ENCODE measurements at regions of chr5 and their contacts with region 1.

Region 1: GRCh38 chr5:130773811-130774210 is 391.2 kb downstream of the HINT1 start:
- DNase-seq: no peak
- H3K4me3 ChIP-seq: no peak overlapping the region
- H3K4me3 Mint-ChIP-seq: no peak overlapping the region
- H3K27ac ChIP-seq: no peak overlapping the region
- H3K27ac Mint-ChIP-seq: no peak overlapping the region
- H3K4me1 ChIP-seq: no peaks in the 10 kb centered on the region
- H3K4me1 Mint-ChIP-seq: no peaks in the 10 kb centered on the region
- H3K27me3 ChIP-seq: peaks cover 4% of the 10 kb centered on the region
- H3K27me3 Mint-ChIP-seq: peaks cover 6 to 33% of the 10 kb centered on the region in 2 donors

Region 2: DNA sequence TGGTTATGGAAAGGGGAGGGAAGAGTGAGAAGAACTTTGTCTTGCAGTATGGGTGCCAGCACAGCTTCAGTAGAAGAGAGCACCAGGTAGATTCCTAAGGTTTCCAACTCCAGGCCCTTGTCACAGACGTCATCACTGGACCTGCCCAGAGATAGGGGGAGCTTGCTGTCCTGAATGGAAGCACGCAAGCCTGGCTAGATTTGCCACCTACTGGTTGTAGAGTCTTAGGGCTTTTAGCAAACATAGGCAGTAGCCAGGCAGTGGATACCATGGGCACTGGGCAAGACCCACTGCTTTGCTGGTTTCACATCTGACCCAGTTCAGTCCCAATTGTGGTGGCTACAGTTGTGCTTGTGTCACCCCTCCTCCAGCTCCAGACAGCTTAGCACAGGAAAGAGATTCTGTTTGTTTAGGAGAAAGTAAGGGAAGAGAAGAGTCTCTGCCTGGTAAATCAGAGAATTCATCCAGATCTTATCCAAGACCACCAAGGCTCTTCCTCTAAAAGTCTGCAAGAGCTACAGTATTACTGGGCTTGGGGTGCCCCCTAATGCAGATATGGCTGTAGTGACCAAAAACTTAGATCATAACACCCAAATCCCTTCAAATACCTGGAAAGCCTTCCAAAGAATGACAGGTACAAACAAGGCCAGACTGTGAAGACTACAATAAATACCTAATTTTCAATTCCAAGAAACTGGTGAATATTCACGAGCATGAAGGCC is 232.3 kb after region 1 on chr5:
- CTCF ChIA-PET with region 1: no interaction called
- POLR2A ChIA-PET with region 1: interaction called, 10 read pairs
- DNase-seq: no peak
- H3K4me3 ChIP-seq: no peak overlapping the region
- H3K4me3 Mint-ChIP-seq: no peak overlapping the region
- H3K27ac ChIP-seq: no peak overlapping the region
- H3K27ac Mint-ChIP-seq: no peak overlapping the region
- H3K4me1 ChIP-seq: no peaks in the 10 kb centered on the region
- H3K4me1 Mint-ChIP-seq: no peaks in the 10 kb centered on the region
- H3K27me3 ChIP-seq: no peaks in the 10 kb centered on the region
- H3K27me3 Mint-ChIP-seq: peaks cover 19 to 29% of the 10 kb centered on the region in 2 donors